ENCODE measurements at regions of chr10 and their contacts with region 1.

Region 1: DNA sequence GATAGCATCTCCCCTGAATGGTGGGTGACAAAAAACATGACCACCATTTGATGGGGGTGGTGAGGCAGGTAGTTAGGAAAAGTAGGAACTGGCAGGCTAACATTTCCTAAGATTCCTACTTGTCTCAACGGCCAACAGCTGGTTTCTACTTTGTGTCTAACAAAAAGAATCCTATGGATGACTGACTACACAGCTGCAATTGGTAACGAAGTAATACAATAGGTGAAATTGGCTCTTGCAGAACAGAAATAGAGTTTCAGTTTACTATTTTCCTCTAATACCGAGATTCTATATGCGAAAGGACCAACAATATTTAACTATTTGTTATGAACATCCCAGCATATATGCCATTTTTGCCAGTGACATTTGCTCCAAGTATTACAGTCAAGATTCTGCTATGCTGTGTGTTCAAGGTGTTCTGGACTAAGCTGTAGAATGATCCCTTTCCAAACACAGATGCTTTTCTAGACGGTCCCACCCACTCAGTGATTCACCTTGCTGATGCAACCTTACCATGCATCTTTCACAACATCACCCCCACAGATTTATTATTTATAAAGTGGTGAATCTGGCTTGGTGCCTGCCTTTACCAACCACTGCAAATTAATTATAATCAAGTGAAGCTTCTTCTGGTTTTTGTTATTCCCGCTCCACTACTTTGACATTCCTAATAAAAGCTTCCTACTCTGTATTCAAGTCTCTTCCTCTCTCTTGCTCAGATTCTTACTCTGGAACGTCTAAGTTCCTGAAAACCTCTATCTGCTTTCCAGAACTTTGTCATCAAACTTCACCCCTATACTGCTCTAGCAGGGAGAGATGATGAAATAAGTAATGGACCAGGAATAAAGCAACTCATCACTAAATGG is 16.8 kb downstream of the BBIP1 start:
- DNase-seq: no peak
- ATAC-seq: peak; percentile 27
- H3K4me3 ChIP-seq: no peak overlapping the region
- H3K27ac ChIP-seq: peak overlapping the region in 2 of 4 donors; percentile 28 to 34
- H3K4me1 ChIP-seq: peaks cover 32% of the 10 kb centered on the region
- H3K27me3 ChIP-seq: no peaks in the 10 kb centered on the region
- CTCF ChIP-seq: no peak
- POLR2A ChIP-seq: no peak

Region 2: DNA sequence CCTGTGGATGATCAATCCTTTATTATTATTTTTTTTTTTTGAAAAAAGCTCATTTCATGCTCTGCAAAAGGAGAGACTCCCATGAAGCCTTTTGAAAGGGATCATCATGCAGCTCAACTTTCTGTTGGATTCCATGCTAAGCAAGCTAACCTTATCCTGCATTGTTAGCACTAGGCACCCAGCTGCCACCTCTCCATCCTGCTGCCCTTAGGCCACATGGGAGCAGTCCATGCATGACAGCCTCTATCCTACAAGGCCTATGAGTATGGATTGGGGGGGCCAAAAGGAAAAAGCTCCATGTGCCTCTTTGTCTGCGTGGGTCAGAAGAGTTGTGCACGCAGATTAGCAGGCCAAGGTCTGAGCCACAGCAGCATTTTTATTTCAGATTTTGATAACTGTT is 616.7 kb before region 1 on chr10:
- intact Hi-C with region 1: loop called (anchors 5 kb)
- DNase-seq: no peak
- ATAC-seq: no peak
- H3K4me3 ChIP-seq: no peak overlapping the region
- H3K27ac ChIP-seq: no peak overlapping the region
- H3K4me1 ChIP-seq: no peaks in the 10 kb centered on the region
- H3K27me3 ChIP-seq: no peaks in the 10 kb centered on the region
- CTCF ChIP-seq: no peak
- POLR2A ChIP-seq: no peak